ENCODE measurements at regions of chr5 and their contacts with region 1.

Region 1: GRCh38 chr5:137629646-137630045 is 106.2 kb downstream of the KLHL3 start:
- DNase-seq: peak in 1 of 2 donors; percentile 65
- H3K4me3 ChIP-seq: peak overlapping the region in 1 of 2 donors; percentile 2
- H3K27ac ChIP-seq: peak overlapping the region; percentile 88 to 93
- H3K4me1 ChIP-seq: peaks cover 4 to 17% of the 10 kb centered on the region in 2 donors
- H3K27me3 ChIP-seq: no peaks in the 10 kb centered on the region
- CTCF ChIP-seq: peak; percentile 88 to 94 (median 93)

Region 2: DNA sequence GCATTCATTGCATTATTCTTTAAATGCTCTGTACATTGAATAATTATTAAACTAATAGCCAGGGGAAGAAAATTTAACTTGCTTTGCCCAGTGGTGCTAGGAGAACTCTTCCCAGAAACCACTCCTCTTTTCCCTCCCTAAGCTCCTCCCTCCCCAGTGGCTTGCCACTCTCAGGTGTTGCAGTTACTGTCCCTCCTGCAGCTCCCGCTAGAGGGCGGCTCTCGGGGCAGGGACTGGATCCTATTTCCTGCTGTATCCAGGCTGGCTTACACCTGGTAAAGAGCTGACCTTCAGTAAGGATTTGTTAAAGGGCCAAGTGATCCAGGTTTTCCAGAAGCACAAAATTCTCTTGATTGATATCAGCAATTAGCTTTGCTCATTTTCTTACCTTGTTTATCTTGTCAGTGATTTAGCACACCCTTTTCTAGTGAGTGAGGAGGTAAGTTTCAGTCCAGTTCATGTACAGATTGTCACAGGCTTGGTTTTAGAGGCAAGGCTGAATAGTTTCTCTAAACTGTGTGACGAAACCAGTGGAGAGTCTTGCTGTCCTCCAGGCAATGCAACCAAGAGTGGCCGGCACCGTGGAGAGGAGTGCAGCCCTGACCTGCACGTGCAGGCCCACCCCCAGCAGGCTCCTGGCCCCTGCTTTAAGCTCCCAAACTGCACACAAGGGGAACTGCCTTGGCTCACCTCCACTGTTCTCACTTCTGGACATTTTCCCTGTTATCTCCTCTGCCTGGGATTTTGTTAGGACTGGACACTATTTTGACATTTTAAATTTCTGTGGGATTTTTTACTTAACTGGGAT is 554.3 kb before region 1 on chr5:
- intact Hi-C with region 1: loop called (anchors 10 kb)
- DNase-seq: no peak
- H3K4me3 ChIP-seq: no peak overlapping the region
- H3K27ac ChIP-seq: no peak overlapping the region
- H3K4me1 ChIP-seq: peaks cover 3 to 13% of the 10 kb centered on the region in 2 donors
- H3K27me3 ChIP-seq: no peaks in the 10 kb centered on the region
- CTCF ChIP-seq: no peak

Region 3: GRCh38 chr5:137660349-137660817 is 30.7 kb after region 1 on chr5:
- intact Hi-C with region 1: loop called (anchors 2 kb)
- DNase-seq: peak; percentile 14 to 87
- H3K4me3 ChIP-seq: no peak overlapping the region
- H3K27ac ChIP-seq: peak overlapping the region; percentile 31 to 60
- H3K4me1 ChIP-seq: peaks cover 4 to 5% of the 10 kb centered on the region in 2 donors
- H3K27me3 ChIP-seq: no peaks in the 10 kb centered on the region
- CTCF ChIP-seq: peak; percentile 72 to 79 (median 76)

Region 4: GRCh38 chr5:137833463-137833862 is 203.8 kb after region 1 on chr5:
- intact Hi-C with region 1: loop called (anchors 10 kb)
- DNase-seq: no peak
- H3K4me3 ChIP-seq: no peak overlapping the region
- H3K27ac ChIP-seq: peak overlapping the region in 1 of 2 donors; percentile 35
- H3K4me1 ChIP-seq: peaks cover 8 to 20% of the 10 kb centered on the region in 2 donors
- H3K27me3 ChIP-seq: no peaks in the 10 kb centered on the region
- CTCF ChIP-seq: no peak

Region 5: DNA sequence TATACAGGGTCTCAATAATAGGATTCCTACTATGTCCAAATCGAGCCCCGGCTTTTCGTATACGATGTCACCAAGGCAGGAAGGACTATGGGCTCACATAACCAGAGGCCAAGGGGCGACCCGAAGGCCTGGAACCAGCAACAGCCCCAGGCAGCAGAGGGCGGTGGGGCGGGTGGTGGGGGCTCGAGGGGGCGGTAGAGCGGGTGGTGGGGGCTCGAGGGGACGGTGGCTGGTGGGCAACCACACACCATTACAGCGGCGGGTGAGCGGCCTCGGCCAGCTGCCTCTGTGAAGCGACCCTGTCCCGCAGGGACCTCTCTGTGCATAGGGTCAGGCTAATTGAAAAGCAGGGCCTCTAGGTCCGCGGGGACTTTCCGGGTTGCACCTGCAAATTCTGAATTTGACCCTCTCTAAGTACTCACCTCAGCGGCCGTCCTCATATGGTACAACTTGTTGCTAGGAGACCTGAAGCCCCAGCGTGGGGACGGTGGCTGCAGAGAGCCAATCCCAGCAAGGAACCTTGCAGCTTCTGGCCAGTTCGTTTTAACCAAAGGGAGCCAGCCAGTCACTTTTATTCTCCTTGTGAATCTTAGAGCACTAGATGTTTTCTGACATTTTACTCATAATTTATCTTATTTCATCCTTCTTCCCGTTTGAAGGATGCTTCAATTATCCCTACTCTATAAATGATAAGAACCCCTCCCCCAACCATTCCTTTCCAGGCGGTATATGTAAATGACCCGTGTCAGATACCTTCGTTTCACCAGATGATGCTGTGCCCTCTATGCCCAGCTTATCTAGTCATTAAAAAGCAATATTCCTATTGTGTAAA is 509.5 kb after region 1 on chr5 and contains the start of gene NME5:
- intact Hi-C with region 1: loop called (anchors 10 kb)
- DNase-seq: no peak
- H3K4me3 ChIP-seq: peak within 1 kb of the TSS; percentile 57 to 73
- H3K27ac ChIP-seq: no peak within 1 kb of the TSS
- H3K4me1 ChIP-seq: no peaks in the 10 kb centered on the region
- H3K27me3 ChIP-seq: no peaks in the 10 kb centered on the region
- CTCF ChIP-seq: no peak
- total RNA-seq, gene NME5: not detected

Measured in ascending aorta (tissue), 2 donors.